Endothelial cell of umbilical vein (primary cell): ENCODE measurements at regions of chr10 and their contacts with region 1.

Region 1: GRCh38 chr10:43857206-43857930 is 208.7 kb upstream of the ZNF32 start:
- DNase-seq: peak; percentile 98
- H3K4me3 ChIP-seq: no peak overlapping the region
- H3K27ac ChIP-seq: peak overlapping the region; percentile 80
- H3K4me1 ChIP-seq: peaks cover 36% of the 10 kb centered on the region
- H3K27me3 ChIP-seq: peaks cover 0 to 1% of the 10 kb centered on the region in 2 experiments
- CTCF ChIP-seq: no peak
- POLR2A ChIP-seq: peak; percentile 79

Region 2: DNA sequence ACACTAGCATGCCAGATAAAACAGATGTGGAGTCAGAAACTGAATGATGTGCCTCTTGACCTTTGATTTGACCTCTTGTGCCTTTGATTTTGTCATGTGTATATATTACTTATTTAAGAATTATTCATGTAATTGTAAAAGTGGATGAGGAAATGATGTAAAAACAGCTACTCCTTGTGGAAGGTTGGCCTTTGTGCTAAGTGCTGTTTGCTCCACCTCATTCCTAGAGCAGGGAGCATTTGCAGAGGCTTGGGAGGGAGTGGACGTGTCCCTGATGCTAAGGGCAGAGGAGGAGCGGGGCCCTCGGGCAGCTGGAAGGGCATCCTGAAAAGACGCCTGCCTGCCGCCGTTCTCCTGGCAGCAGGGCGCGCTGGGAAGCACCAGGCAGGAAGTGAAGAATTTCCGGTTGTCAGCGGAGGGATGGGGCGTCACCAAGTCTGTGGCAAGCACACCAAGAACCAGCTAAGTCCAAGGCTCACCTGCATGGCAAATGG is 11.1 kb before region 1 on chr10:
- CTCF ChIA-PET with region 1: interaction called, 22 read pairs
- POLR2A ChIA-PET with region 1: interaction called, 3 read pairs
- dilution Hi-C with region 1: no loop called
- intact Hi-C with region 1: loop called (anchors 1 kb)
- DNase-seq: peak; percentile 73
- H3K4me3 ChIP-seq: no peak overlapping the region
- H3K27ac ChIP-seq: peak overlapping the region; percentile 65
- H3K4me1 ChIP-seq: peaks cover 17% of the 10 kb centered on the region
- H3K27me3 ChIP-seq: no peaks in the 10 kb centered on the region
- CTCF ChIP-seq: no peak
- POLR2A ChIP-seq: no peak

Region 3: GRCh38 chr10:43905512-43906236 is 48.3 kb after region 1 on chr10:
- CTCF ChIA-PET with region 1: no interaction called
- POLR2A ChIA-PET with region 1: no interaction called
- dilution Hi-C with region 1: no loop called
- intact Hi-C with region 1: loop called (anchors 2 kb)
- DNase-seq: peak; percentile 11
- H3K4me3 ChIP-seq: no peak overlapping the region
- H3K27ac ChIP-seq: no peak overlapping the region
- H3K4me1 ChIP-seq: peaks cover 6% of the 10 kb centered on the region
- H3K27me3 ChIP-seq: peaks cover 0 to 8% of the 10 kb centered on the region in 2 experiments
- CTCF ChIP-seq: no peak
- POLR2A ChIP-seq: no peak

Region 4: GRCh38 chr10:44008270-44008916 is 151.0 kb after region 1 on chr10:
- CTCF ChIA-PET with region 1: no interaction called
- POLR2A ChIA-PET with region 1: no interaction called
- dilution Hi-C with region 1: no loop called
- intact Hi-C with region 1: loop called (anchors 1 kb)
- DNase-seq: peak; percentile 76
- H3K4me3 ChIP-seq: no peak overlapping the region
- H3K27ac ChIP-seq: peak overlapping the region; percentile 90
- H3K4me1 ChIP-seq: peaks cover 18% of the 10 kb centered on the region
- H3K27me3 ChIP-seq: no peaks in the 10 kb centered on the region
- CTCF ChIP-seq: no peak
- POLR2A ChIP-seq: no peak